OCI-LY7 (cell line): ENCODE measurements at regions of chr2 and their contacts with region 1.

Region 1: DNA sequence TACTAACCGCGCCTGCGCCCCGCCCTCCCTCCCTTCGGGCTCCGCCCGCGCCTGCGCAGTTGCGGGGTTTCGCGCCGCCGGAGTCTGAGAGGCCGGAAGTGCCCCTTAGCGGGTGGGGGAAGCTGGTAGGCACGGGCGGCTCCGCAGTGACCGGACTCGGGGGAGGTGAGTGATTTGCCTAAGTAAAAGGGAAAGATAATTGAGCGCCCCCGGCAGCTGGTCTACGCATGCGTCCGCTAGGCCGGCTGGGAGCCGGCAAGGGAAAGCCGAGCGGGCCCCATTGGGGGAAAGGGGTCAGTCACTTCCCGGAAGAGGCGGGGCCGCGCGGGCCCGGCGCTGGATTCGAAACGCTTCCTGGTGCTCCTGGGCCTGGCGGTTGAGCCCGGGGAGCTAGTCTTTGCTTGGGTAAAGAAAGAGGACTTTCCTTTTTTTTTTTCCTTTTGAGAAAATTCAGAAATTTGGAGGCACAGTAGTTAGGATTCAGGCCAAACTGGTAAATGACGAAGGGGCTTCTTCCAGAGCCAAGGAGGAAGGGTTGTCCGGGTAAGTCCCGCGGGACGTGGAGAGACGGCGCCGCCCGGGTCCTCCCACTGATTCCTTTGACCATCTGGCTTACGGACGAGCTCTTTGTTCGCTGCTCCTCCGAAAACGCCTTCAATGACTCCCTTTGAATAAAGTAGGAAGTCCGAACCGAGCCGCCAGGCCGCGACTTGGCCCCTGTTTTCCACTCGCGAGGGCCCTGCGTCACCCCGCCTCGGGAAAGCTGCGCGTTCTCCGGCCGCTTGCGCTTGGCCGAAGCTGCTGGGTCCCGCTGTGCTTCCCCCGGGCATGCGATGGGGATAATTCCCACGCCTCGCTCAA is at the starts of genes GEN1 and SMC6:
- DNase-seq: peak; percentile 97
- H3K4me3 ChIP-seq: peak within 1 kb of the TSS; percentile 98
- H3K27ac ChIP-seq: peak within 1 kb of the TSS; percentile 89
- H3K4me1 ChIP-seq: peaks cover 52% of the 10 kb centered on the region
- CTCF ChIP-seq: no peak
- total RNA-seq, gene GEN1: 37.6 and 52.5 TPM in 2 replicates
- total RNA-seq, gene SMC6: 37.0 and 48.9 TPM in 2 replicates

Region 2: DNA sequence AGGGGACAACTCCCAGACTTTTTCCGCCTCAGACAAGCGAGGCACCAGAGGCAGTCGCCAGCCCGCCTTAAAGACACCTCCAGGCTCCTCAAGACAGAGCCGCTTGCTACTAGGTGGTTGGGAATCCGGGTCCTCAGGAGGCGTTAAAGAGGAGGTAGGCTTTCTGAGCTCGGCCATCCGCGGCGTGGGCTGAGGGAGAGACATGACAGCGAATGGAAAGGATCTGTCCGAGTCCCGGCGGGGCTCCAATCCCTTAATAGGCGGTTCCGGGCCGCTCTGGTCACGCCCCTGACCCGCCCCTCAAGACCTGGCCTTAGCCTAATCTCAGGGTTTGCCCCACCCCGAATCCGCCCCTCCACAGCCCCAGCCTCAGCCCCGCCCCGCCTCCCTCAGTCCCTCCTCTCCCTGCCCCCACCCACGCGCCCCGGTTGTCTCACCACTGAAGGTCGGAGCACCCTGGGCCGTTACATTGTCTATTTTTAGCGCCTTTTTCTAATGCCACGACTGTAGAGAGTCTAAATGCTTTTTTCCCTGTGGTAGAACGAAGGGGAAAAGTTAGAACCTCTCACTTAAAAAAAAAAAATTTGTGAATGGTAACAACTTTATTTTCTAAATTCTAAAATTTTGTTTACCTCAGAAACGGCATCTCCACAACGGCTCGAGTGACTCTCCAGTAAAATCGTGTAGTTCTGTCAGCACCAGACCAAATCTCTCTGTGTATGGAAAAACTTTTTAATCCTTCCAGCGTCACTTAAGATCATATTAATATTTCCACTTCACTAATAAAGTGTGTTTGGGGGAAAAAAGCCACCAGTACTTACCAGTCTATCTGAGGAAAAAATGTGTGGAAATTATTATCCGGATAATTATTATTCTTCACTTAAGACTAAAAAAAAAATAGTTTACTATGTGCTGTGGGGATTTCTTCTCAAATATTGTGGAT is 235.6 kb before region 1 on chr2 and contains the start of gene RAD51AP2:
- CTCF ChIA-PET with region 1: no interaction called
- POLR2A ChIA-PET with region 1: interaction called, 6 read pairs
- intact Hi-C with region 1: loop called (anchors 5 kb)
- DNase-seq: peak; percentile 80
- H3K4me3 ChIP-seq: peak within 1 kb of the TSS; percentile 66
- H3K27ac ChIP-seq: no peak within 1 kb of the TSS
- H3K4me1 ChIP-seq: peaks cover 33% of the 10 kb centered on the region
- CTCF ChIP-seq: no peak
- total RNA-seq, gene RAD51AP2: 0.05 and 0.35 TPM in 2 replicates

Region 3: GRCh38 chr2:17765408-17765807 is 11.4 kb after region 1 on chr2:
- CTCF ChIA-PET with region 1: no interaction called
- POLR2A ChIA-PET with region 1: interaction called, 10 read pairs
- intact Hi-C with region 1: no loop called
- DNase-seq: no peak
- H3K4me3 ChIP-seq: no peak overlapping the region
- H3K27ac ChIP-seq: no peak overlapping the region
- H3K4me1 ChIP-seq: no peaks in the 10 kb centered on the region
- CTCF ChIP-seq: no peak

Region 4: DNA sequence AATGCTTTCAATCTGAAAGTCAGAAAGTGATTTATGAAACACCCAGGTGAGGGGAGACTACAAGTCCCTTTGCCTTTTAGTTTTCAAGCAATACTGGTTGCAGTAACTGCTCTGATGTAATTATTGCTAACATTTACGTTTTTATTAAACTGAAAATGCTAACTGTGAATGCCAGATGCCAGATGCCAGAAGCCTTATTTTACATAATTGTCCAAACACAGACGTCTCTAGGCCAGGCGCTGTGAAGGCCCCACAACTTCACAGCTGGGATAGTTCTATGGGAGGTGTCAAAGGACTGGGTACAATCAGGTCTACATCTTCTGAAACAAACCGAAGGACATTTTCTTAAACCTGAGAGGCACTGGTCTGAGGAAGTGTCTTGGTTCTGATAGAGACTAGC is 34.7 kb after region 1 on chr2:
- CTCF ChIA-PET with region 1: no interaction called
- POLR2A ChIA-PET with region 1: no interaction called
- intact Hi-C with region 1: no loop called
- DNase-seq: no peak
- H3K4me3 ChIP-seq: no peak overlapping the region
- H3K27ac ChIP-seq: no peak overlapping the region
- H3K4me1 ChIP-seq: no peaks in the 10 kb centered on the region
- CTCF ChIP-seq: no peak

Region 5: GRCh38 chr2:17804358-17804757 is 50.3 kb after region 1 on chr2:
- CTCF ChIA-PET with region 1: interaction called, 3 read pairs
- POLR2A ChIA-PET with region 1: interaction called, 6 read pairs
- intact Hi-C with region 1: loop called (anchors 2 kb)
- DNase-seq: peak; percentile 76
- H3K4me3 ChIP-seq: peak overlapping the region; percentile 54
- H3K27ac ChIP-seq: peak overlapping the region; percentile 38
- H3K4me1 ChIP-seq: peaks cover 41% of the 10 kb centered on the region
- CTCF ChIP-seq: no peak

Region 6: DNA sequence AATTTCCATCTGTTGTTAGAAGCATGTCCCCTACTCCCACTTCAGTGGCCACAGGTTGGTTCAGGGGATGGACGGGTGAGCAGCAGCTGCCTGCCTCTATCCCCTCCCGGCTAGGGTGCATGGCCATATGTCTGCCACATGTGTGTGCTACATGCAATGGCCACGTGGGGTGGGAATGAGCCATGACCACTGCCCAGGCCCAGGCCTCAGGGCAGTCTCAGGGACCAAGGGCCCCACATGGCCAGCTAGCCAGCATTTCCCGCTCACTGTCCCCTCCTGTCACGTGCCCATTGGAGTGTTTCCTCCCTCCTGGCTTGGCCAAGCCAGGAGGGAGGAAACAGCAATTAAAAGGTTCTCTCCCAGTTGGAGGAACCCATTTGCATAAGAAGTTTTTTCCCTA is 241.6 kb after region 1 on chr2:
- CTCF ChIA-PET with region 1: no interaction called
- POLR2A ChIA-PET with region 1: no interaction called
- intact Hi-C with region 1: no loop called
- DNase-seq: no peak
- H3K4me3 ChIP-seq: no peak overlapping the region
- H3K27ac ChIP-seq: no peak overlapping the region
- H3K4me1 ChIP-seq: no peaks in the 10 kb centered on the region
- CTCF ChIP-seq: no peak